Endothelial cell of umbilical vein (primary cell): ENCODE measurements at regions of chr7 and their contacts with region 1.

Region 1: DNA sequence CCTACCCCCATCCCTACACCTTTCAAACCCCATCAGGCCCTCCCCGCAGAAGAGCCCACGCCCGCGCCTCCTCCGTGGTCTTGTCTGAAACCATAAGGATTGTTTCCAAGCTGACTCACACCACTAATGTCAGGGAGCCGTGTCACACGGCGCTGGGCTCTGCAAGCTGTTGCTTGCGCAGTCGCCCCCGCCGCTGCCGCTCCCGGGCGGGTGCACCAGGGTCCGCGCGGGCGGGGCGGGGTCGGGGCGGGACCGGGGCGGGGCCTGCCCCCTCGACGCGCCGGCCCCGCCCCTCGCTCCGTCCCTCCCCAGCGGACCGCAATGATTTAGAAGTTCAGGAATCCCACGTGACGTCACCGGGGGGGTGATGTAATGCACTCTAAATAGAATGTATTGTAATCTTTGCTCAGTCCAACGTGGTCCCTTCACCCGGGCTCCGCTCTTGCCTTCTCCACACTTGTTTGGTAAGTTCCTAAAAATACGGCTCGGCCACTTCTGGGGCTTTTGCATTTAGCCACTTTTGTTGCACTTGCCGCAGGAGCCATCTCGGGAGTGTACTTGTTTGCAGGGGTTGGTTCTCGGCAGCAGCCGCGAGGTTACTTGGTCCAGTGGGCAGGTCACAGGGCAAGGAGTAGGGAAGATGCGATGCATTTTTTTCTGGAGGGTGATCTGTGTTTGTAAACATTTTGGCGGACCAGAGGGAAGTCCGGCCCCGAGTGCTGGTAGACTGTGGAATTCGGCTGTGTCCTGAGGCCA is 3.2 kb upstream of the CREB5 start:
- DNase-seq: peak; percentile 93
- H3K4me3 ChIP-seq: peak overlapping the region; percentile 51 to 87 (median 79)
- H3K27ac ChIP-seq: peak overlapping the region; percentile 63
- H3K4me1 ChIP-seq: peaks cover 15% of the 10 kb centered on the region
- H3K27me3 ChIP-seq: no peaks in the 10 kb centered on the region
- CTCF ChIP-seq: no peak
- POLR2A ChIP-seq: no peak

Region 2: GRCh38 chr7:27593226-27593625 is 815.9 kb before region 1 on chr7:
- CTCF ChIA-PET with region 1: no interaction called
- POLR2A ChIA-PET with region 1: no interaction called
- dilution Hi-C with region 1: no loop called
- intact Hi-C with region 1: no loop called
- DNase-seq: peak; percentile 19
- H3K4me3 ChIP-seq: no peak overlapping the region
- H3K27ac ChIP-seq: no peak overlapping the region
- H3K4me1 ChIP-seq: peaks cover 4% of the 10 kb centered on the region
- H3K27me3 ChIP-seq: no peaks in the 10 kb centered on the region
- CTCF ChIP-seq: no peak
- POLR2A ChIP-seq: no peak

Region 3: DNA sequence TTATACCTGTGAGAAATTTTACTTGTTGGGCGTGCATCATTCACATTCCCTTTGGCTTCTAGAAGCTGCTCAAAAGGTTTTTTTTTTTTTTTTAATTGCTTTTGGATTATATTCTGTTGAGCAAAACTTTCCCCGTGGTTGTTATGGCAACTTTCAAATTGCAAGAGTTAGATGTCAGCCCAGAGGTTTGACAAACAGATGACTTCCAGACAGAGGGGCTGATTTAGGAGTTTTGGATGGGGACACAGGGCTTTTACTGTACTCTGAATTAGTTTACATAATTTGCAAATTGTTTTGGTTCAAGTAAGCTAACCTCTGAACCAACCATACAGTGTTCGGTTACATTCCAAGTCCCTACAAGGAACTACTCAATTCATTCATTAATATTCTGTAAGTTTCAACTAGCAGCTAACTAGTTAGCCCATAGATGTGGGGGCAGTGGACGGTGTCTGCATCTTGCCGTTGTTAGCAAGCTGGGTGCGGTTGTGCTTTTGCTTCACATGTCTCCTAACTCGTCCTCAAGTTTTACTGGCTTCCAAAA is 162.1 kb before region 1 on chr7:
- CTCF ChIA-PET with region 1: no interaction called
- POLR2A ChIA-PET with region 1: no interaction called
- dilution Hi-C with region 1: no loop called
- intact Hi-C with region 1: no loop called
- DNase-seq: no peak
- H3K4me3 ChIP-seq: no peak overlapping the region
- H3K27ac ChIP-seq: no peak overlapping the region
- H3K4me1 ChIP-seq: no peaks in the 10 kb centered on the region
- H3K27me3 ChIP-seq: no peaks in the 10 kb centered on the region
- CTCF ChIP-seq: no peak
- POLR2A ChIP-seq: no peak

Region 4: DNA sequence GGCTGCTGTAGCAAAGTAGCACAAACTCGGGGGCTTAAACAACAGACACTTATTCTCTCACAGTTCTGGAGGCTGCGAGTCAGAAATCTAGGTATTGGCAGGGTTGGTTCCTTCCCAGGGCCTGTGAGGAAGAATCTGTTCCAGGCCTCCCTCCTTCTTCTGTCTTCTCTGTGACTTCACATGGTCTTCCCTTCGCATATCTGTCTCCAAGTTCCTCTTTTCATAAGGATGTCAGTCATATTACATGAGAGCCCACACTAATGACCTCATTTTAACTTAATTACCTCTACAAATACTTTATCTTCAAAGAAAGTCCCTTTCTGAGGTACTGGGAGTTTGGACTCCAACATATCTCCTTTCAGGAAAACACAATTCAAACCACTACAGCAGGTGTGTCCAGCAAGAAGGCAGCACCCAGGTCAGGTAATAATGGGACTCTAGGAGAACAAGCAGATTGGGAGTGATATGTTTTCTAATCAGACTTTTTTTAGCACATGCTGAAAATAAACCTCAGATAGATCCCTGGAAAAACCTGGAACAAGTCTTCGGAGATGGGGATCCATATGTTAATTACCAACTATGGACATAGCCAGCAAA is 14.9 kb after region 1 on chr7:
- CTCF ChIA-PET with region 1: no interaction called
- POLR2A ChIA-PET with region 1: no interaction called
- dilution Hi-C with region 1: no loop called
- intact Hi-C with region 1: no loop called
- DNase-seq: no peak
- H3K4me3 ChIP-seq: no peak overlapping the region
- H3K27ac ChIP-seq: no peak overlapping the region
- H3K4me1 ChIP-seq: no peaks in the 10 kb centered on the region
- H3K27me3 ChIP-seq: peaks cover 0 to 13% of the 10 kb centered on the region in 2 experiments
- CTCF ChIP-seq: no peak
- POLR2A ChIP-seq: no peak

Region 5: DNA sequence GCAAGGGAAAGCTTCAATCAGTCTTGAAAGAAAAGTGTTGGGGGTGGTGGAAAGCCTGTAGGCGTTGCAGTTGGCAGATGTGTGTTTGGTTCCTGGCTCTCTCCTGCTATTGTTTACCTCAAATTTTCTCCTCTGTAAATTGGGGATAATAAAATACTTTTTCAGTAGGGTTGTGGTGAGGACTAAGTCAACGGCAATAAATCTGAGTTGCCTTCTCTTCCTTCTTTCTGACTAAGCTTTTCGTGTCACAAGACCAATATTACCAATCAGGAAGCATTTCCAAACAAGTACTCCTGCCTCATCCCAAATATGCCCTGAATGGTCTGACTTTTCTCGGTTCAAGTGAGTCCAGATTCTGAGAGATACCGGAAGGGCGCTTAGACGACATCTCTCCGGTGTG is 57.2 kb after region 1 on chr7:
- CTCF ChIA-PET with region 1: no interaction called
- POLR2A ChIA-PET with region 1: no interaction called
- dilution Hi-C with region 1: no loop called
- intact Hi-C with region 1: no loop called
- DNase-seq: no peak
- H3K4me3 ChIP-seq: no peak overlapping the region
- H3K27ac ChIP-seq: no peak overlapping the region
- H3K4me1 ChIP-seq: no peaks in the 10 kb centered on the region
- H3K27me3 ChIP-seq: peaks cover 0 to 2% of the 10 kb centered on the region in 2 experiments
- CTCF ChIP-seq: no peak
- POLR2A ChIP-seq: no peak

Region 6: DNA sequence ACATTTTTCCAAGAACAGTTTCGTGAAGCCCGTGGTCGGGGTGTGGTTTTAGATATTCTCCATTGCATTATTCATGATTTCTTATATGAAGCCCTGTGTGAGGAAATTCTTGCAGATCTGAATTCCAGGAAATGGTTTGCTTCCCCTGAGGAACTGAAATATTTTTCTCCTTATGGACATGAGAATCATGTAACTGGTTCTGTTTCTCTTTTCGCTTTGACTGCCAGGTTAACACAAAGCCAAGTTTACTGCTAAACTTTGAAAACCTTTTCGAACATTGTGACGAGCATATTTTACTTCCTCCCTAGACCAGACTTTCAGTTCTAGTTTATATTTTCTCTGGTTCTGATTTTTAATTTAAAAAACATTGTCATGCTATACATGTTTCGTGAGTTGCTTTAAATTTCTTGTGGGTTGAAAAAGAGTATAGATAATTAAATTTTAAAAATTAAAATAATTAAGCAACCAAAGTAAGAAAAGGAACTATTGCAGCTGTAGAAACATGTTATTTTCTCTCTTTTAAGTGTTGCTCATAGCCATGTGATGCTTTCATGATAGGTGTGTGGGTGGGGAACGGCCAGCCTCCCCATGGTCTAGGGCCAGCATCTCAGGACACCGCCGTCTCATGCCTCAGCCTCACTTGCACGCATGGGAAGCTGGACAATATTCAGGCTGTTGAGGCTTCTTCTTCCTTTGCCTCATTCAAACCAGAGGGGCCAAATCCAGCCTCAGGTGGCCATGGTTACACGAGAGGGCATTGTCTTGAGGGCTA is 100.3 kb after region 1 on chr7:
- CTCF ChIA-PET with region 1: no interaction called
- POLR2A ChIA-PET with region 1: no interaction called
- dilution Hi-C with region 1: no loop called
- intact Hi-C with region 1: loop called (anchors 1 kb)
- DNase-seq: peak; percentile 73
- H3K4me3 ChIP-seq: peak overlapping the region in 2 of 3 experiments; percentile 8 to 27
- H3K27ac ChIP-seq: no peak overlapping the region
- H3K4me1 ChIP-seq: peaks cover 17% of the 10 kb centered on the region
- H3K27me3 ChIP-seq: no peaks in the 10 kb centered on the region
- CTCF ChIP-seq: no peak
- POLR2A ChIP-seq: no peak

Region 7: GRCh38 chr7:28530175-28530802 is 121.2 kb after region 1 on chr7:
- CTCF ChIA-PET with region 1: interaction called, 4 read pairs
- POLR2A ChIA-PET with region 1: no interaction called
- dilution Hi-C with region 1: no loop called
- intact Hi-C with region 1: loop called (anchors 1 kb)
- DNase-seq: peak; percentile 96
- H3K4me3 ChIP-seq: peak overlapping the region in 1 of 3 experiments; percentile 16
- H3K27ac ChIP-seq: peak overlapping the region; percentile 61
- H3K4me1 ChIP-seq: peaks cover 31% of the 10 kb centered on the region
- H3K27me3 ChIP-seq: no peaks in the 10 kb centered on the region
- CTCF ChIP-seq: no peak
- POLR2A ChIP-seq: peak; percentile 62

Region 8: GRCh38 chr7:28573059-28573553 is 164.0 kb after region 1 on chr7:
- CTCF ChIA-PET with region 1: no interaction called
- POLR2A ChIA-PET with region 1: no interaction called
- dilution Hi-C with region 1: no loop called
- intact Hi-C with region 1: loop called (anchors 1 kb)
- DNase-seq: peak; percentile 79
- H3K4me3 ChIP-seq: no peak overlapping the region
- H3K27ac ChIP-seq: no peak overlapping the region
- H3K4me1 ChIP-seq: peaks cover 21% of the 10 kb centered on the region
- H3K27me3 ChIP-seq: peaks cover 4 to 10% of the 10 kb centered on the region in 2 experiments
- CTCF ChIP-seq: no peak
- POLR2A ChIP-seq: no peak

Region 9: DNA sequence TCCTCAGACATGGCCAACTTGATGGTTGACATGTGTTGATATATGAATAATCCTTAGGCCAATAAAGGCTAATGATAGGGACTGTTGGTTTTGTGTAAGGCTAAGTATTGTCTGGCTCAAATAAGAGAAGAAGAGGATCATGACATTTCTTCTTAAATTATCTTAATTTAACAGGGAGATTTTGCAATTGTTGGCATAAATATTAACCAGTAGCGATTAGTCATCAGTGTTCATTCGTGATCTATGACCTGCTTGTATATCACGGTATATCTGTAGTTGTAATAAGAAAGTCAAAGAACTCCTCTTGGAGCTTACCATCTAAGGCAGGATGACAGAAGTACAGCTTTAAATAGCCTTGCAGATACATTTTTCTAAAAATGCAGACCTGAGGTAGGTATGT is 199.6 kb after region 1 on chr7:
- CTCF ChIA-PET with region 1: interaction called, 3 read pairs
- POLR2A ChIA-PET with region 1: no interaction called
- dilution Hi-C with region 1: no loop called
- intact Hi-C with region 1: loop called (anchors 1 kb)
- DNase-seq: no peak
- H3K4me3 ChIP-seq: no peak overlapping the region
- H3K27ac ChIP-seq: no peak overlapping the region
- H3K4me1 ChIP-seq: peaks cover 27% of the 10 kb centered on the region
- H3K27me3 ChIP-seq: no peaks in the 10 kb centered on the region
- CTCF ChIP-seq: no peak
- POLR2A ChIP-seq: no peak

Region 10: GRCh38 chr7:28626624-28627262 is 217.6 kb after region 1 on chr7:
- CTCF ChIA-PET with region 1: interaction called, 4 read pairs
- POLR2A ChIA-PET with region 1: interaction called, 5 read pairs
- dilution Hi-C with region 1: no loop called
- intact Hi-C with region 1: loop called (anchors 1 kb)
- DNase-seq: peak; percentile 44
- H3K4me3 ChIP-seq: no peak overlapping the region
- H3K27ac ChIP-seq: no peak overlapping the region
- H3K4me1 ChIP-seq: peaks cover 3% of the 10 kb centered on the region
- H3K27me3 ChIP-seq: peaks cover 1 to 2% of the 10 kb centered on the region in 2 experiments
- CTCF ChIP-seq: peak; percentile 61 to 71
- POLR2A ChIP-seq: no peak

Region 11: GRCh38 chr7:28853834-28854749 is 445.0 kb after region 1 on chr7:
- CTCF ChIA-PET with region 1: interaction called, 5 read pairs
- POLR2A ChIA-PET with region 1: no interaction called
- dilution Hi-C with region 1: no loop called
- intact Hi-C with region 1: loop called (anchors 5 kb)
- DNase-seq: peak; percentile 72
- H3K4me3 ChIP-seq: peak overlapping the region; percentile 4 to 40 (median 28)
- H3K27ac ChIP-seq: no peak overlapping the region
- H3K4me1 ChIP-seq: peaks cover 5% of the 10 kb centered on the region
- H3K27me3 ChIP-seq: peaks cover 21 to 34% of the 10 kb centered on the region in 2 experiments
- CTCF ChIP-seq: peak; percentile 87 to 94
- POLR2A ChIP-seq: no peak